Activated B cell treated with CpG ODN at 0.5 μM for 24 hours (primary cell): ENCODE measurements at regions of chr2 and their contacts with region 1.

Region 1: DNA sequence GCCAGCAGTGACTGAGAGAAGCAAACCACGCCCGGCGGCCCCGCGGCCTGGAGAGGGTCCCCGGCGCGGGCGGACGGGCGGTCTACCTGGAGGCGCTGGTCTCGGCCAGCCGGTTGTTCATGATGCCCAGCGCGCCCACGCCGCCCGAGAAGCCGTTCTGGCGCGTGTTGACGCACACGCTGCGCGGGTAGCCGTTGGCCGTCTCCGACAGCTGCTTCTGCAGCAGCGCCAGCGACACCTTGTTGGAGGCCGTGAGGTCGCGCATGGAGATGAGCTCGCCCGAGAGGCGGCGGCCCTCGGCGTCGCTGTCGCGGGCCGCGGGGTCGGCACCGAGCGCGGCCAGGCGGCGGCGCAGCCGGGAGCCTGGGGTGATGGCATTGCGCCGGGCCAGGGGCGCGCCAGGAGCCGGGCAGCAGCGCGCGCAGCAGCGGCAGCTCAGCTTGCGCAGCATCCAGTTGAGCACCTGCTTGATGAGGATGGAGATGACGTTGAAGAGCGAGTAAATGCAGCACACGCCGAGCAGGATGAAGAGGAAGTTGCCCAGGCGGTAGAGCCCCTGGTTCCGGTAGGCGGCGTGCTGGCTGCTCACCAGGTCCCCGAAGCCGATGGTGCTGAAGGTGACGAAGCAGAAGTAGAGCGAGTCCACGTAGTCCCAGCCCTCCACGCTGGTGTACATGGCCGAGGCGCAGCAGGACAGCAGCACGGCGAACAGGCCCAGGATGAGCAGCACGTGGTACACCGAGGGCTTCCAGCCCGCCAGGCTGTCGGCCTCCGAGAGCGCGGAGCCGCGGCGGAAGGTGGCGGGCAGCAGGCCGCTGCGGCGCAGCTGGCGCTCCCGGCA is 118.1 kb downstream of the MSH2 start:
- DNase-seq: peak; percentile 74
- ATAC-seq: peak; percentile 91
- H3K4me3 Mint-ChIP-seq: peak overlapping the region; percentile 85
- H3K27ac Mint-ChIP-seq: peak overlapping the region; percentile 87
- H3K4me1 Mint-ChIP-seq: peaks cover 13% of the 10 kb centered on the region
- H3K27me3 Mint-ChIP-seq: no peaks in the 10 kb centered on the region
- CTCF ChIP-seq: no peak

Region 2: GRCh38 chr2:47437287-47437686 is 83.8 kb before region 1 on chr2:
- CTCF ChIA-PET with region 1: interaction called, 7 read pairs
- POLR2A ChIA-PET with region 1: no interaction called
- intact Hi-C with region 1: loop called (anchors 1 kb)
- DNase-seq: no peak
- ATAC-seq: no peak
- H3K4me3 Mint-ChIP-seq: no peak overlapping the region
- H3K27ac Mint-ChIP-seq: no peak overlapping the region
- H3K4me1 Mint-ChIP-seq: no peaks in the 10 kb centered on the region
- H3K27me3 Mint-ChIP-seq: no peaks in the 10 kb centered on the region
- CTCF ChIP-seq: no peak

Region 3: GRCh38 chr2:47653902-47654789 is 133.1 kb after region 1 on chr2:
- CTCF ChIA-PET with region 1: interaction called, 3 read pairs
- POLR2A ChIA-PET with region 1: interaction called, 8 read pairs
- intact Hi-C with region 1: loop called (anchors 1 kb)
- DNase-seq: no peak
- ATAC-seq: no peak
- H3K4me3 Mint-ChIP-seq: peak overlapping the region; percentile 51
- H3K27ac Mint-ChIP-seq: peak overlapping the region; percentile 90
- H3K4me1 Mint-ChIP-seq: peaks cover 51% of the 10 kb centered on the region
- H3K27me3 Mint-ChIP-seq: no peaks in the 10 kb centered on the region
- CTCF ChIP-seq: no peak

Region 4: DNA sequence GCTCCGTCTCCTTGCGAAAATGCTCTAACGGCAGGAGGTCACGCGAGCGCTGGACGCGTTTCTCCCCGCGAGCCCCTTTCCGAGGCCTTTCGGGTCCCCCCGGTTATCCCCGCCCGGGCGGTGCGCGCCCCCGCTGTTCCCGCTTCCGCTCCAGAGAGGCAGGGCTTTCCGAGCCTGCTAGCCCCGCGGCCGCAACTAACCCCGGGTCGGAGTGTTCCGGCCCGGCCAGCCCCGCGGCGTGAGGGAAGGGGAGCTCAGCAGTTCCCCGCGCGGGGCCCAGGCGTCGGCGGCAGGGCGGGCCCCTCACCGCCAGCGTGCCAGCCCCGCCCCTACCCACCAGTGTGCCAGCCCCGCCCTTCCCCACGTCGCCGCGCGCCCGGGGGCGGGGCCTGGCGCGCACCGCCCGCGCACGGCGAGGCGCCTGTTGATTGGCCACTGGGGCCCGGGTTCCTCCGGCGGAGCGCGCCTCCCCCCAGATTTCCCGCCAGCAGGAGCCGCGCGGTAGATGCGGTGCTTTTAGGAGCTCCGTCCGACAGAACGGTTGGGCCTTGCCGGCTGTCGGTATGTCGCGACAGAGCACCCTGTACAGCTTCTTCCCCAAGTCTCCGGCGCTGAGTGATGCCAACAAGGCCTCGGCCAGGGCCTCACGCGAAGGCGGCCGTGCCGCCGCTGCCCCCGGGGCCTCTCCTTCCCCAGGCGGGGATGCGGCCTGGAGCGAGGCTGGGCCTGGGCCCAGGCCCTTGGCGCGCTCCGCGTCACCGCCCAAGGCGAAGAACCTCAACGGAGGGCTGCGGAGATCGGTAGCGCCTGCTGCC is 261.8 kb after region 1 on chr2 and contains the start of gene MSH6:
- CTCF ChIA-PET with region 1: interaction called, 5 read pairs
- POLR2A ChIA-PET with region 1: interaction called, 4 read pairs
- intact Hi-C with region 1: loop called (anchors 5 kb)
- DNase-seq: peak; percentile 93
- ATAC-seq: peak; percentile 89
- H3K4me3 Mint-ChIP-seq: peak within 1 kb of the TSS; percentile 92
- H3K27ac Mint-ChIP-seq: peak within 1 kb of the TSS; percentile 83
- H3K4me1 Mint-ChIP-seq: peaks cover 22% of the 10 kb centered on the region
- H3K27me3 Mint-ChIP-seq: no peaks in the 10 kb centered on the region
- CTCF ChIP-seq: no peak
- total RNA-seq, gene MSH6: 40.6 and 42.1 TPM in 2 replicates